PC-3 (cell line): ENCODE measurements at regions of chr17 and their contacts with region 1.

Region 1: DNA sequence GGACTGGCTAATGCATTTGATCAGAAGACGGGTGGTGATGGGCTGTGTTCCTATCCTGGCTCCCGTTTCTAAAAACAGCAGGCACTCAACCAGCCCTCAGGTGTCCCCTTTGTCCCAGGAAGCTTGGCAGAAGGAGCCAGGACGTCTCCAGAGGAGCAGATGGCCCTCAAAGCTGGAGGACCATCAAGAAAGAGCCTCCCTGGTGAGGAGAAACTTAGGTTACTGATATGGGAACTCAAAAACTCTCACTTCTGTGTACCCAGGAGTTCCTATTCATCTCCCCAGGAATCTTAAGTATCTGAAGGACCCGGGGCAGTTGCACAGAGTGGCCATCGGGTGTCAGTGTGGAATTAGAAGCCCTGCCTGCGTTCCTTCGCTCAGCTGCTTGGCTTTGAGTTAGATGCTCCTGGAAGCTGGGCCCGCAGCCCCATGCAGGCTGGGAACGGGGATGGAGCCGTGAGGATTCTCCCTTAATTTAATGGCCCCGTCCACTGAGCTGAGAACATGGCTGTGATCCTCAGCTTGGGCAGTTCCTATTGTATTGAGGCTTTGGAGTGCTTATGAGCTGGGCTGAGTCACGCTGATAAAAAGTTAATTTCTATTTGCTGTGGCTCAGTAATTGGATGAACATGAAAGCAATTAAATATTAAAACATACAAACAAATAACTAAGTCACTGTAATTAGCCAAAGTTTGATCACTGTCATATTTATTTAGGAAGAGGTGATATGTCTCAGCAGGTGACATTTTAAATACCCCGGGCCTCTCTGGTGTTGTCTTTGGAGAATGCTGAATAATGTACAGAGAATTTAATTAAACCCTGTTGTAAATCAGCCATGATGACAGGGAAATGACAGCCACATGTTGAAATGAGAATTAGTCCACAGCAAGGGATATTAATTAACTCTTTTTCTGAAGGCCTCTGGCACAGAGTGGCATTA is 402.1 kb downstream of the SEC14L1 start:
- DNase-seq: peak; percentile 91
- ATAC-seq: peak; percentile 96
- H3K4me3 ChIP-seq: no peak overlapping the region
- H3K27ac ChIP-seq: no peak overlapping the region
- H3K4me1 ChIP-seq: no peaks in the 10 kb centered on the region; the same call in 1 of the 2 replicates
- H3K27me3 ChIP-seq: peaks cover 60% of the 10 kb centered on the region
- CTCF ChIP-seq: peak; percentile 98

Region 2: GRCh38 chr17:77607381-77608005 is 64.7 kb after region 1 on chr17:
- CTCF ChIA-PET with region 1: interaction called, 5 read pairs
- POLR2A ChIA-PET with region 1: no interaction called
- intact Hi-C with region 1: loop called (anchors 1 kb)
- DNase-seq: no peak
- ATAC-seq: no peak
- H3K4me3 ChIP-seq: no peak overlapping the region
- H3K27ac ChIP-seq: no peak overlapping the region
- H3K4me1 ChIP-seq: no peaks in the 10 kb centered on the region
- H3K27me3 ChIP-seq: peaks cover 74% of the 10 kb centered on the region
- CTCF ChIP-seq: no peak

Region 3: GRCh38 chr17:77649717-77650211 is 106.9 kb after region 1 on chr17:
- CTCF ChIA-PET with region 1: interaction called, 4 read pairs
- POLR2A ChIA-PET with region 1: no interaction called
- intact Hi-C with region 1: loop called (anchors 1 kb)
- DNase-seq: peak; percentile 66
- ATAC-seq: peak; percentile 72
- H3K4me3 ChIP-seq: no peak overlapping the region
- H3K27ac ChIP-seq: no peak overlapping the region
- H3K4me1 ChIP-seq: peaks cover 22% of the 10 kb centered on the region
- H3K27me3 ChIP-seq: peaks cover 62% of the 10 kb centered on the region
- CTCF ChIP-seq: peak; percentile 57

Region 4: GRCh38 chr17:77728474-77728795 is 185.6 kb after region 1 on chr17:
- CTCF ChIA-PET with region 1: no interaction called
- POLR2A ChIA-PET with region 1: no interaction called
- intact Hi-C with region 1: loop called (anchors 2 kb)
- DNase-seq: no peak
- ATAC-seq: peak; percentile 13; the same call in 1 of the 2 replicates
- H3K4me3 ChIP-seq: no peak overlapping the region
- H3K27ac ChIP-seq: no peak overlapping the region
- H3K4me1 ChIP-seq: no peaks in the 10 kb centered on the region
- H3K27me3 ChIP-seq: peaks cover 90% of the 10 kb centered on the region
- CTCF ChIP-seq: no peak

Region 5: GRCh38 chr17:78013683-78014467 is 471.1 kb after region 1 on chr17:
- CTCF ChIA-PET with region 1: interaction called, 9 read pairs
- POLR2A ChIA-PET with region 1: no interaction called
- intact Hi-C with region 1: loop called (anchors 1 kb)
- DNase-seq: peak; percentile 85
- ATAC-seq: peak; percentile 83
- H3K4me3 ChIP-seq: no peak overlapping the region
- H3K27ac ChIP-seq: no peak overlapping the region
- H3K4me1 ChIP-seq: no peaks in the 10 kb centered on the region
- H3K27me3 ChIP-seq: 0 out of 2 replicates have a peak, but pooled peaks cover 3% of the 10 kb centered on the region
- CTCF ChIP-seq: peak; percentile 98